ENCODE measurements at regions of chr17 and their contacts with region 1.

Region 1: GRCh38 chr17:75077496-75078283 is 10.1 kb upstream of the SLC16A5 start:
- DNase-seq: peak in 1 of 2 experiments; percentile 55
- H3K4me3 ChIP-seq: peak overlapping the region; percentile 22; the same call in 1 of the 2 replicates
- H3K27ac ChIP-seq: peak overlapping the region; percentile 93
- H3K4me1 ChIP-seq: peaks cover 35% of the 10 kb centered on the region
- H3K27me3 ChIP-seq: no peaks in the 10 kb centered on the region
- CTCF ChIP-seq: no peak

Region 2: DNA sequence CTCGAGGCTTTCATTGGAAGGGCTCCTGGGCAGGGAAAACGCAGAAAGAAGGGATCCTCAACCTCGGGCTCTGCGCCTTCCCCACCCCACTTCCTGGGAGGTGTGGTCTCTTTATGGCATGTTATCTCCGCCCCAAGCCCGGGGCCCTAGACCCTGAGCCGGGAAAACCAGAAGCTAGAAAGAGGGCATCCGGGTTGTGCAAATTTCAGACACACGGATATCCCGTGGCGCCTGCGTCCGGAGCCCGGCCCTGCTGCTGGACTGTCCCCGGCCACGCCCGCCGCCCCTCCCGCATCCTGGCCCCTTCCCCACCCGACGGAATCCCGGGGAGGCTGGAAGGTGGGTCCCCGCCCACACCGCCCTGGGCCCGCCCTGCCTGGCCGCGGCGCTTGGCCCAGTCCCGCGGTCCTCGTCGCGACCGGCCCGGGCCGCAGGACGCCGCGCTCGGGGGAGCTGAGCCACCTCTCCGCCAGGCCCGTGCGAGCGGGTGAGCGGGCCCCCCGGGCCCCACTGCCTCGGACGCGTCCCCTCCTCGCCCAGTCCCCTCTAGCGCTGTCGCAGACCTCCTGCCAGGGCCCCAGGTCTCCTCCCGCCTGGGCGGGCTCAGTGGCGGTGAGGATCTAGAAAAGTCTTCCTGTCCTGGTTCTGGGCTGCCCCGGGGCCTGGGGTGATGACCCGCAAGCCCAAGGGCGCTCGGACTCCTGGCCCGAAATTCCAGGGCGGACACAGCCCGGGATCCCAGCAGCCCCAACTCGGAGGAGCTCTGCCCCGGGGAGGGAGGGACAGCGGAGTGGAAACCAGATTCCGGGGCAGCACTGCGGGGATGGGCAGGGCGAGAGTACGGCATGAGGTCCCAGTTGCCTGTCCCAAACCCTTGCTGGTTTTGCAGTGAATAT is 10.1 kb after region 1 on chr17 and contains the start of gene SLC16A5:
- CTCF ChIA-PET with region 1: interaction called, 4 read pairs
- POLR2A ChIA-PET with region 1: interaction called, 18 read pairs
- intact Hi-C with region 1: no loop called
- DNase-seq: peak; percentile 93 to 98
- H3K4me3 ChIP-seq: peak within 1 kb of the TSS; percentile 93
- H3K27ac ChIP-seq: peak within 1 kb of the TSS; percentile 91
- H3K4me1 ChIP-seq: peaks cover 84% of the 10 kb centered on the region
- H3K27me3 ChIP-seq: no peaks in the 10 kb centered on the region
- CTCF ChIP-seq: no peak
- total RNA-seq, gene SLC16A5: 70.2 and 88.5 TPM in 2 replicates

Region 3: DNA sequence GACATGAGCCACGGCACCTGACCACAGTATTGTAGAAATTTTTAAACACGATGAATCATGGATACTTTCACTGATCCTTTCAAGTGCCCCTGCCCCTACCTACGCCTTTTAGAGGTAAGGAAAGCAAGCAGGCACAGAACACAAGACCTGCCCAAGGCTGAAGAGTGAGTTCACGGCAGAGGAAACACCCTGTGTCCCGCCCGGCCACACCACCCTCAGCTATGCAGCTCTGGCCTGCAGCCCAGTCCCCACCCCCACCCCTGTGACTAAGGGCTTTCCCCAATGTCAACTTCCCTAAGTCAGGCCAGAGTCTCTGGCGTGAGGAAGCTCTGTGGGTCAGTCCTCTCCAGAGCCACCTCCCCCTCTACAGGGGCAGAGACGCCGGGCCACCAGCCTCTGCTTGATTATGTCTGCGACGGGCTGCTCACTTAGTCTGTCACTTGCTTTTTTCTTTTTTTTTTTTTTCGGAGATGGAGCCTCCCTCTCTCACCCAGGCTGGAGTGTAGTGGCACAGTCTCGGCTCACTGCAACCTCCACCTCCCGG is 18.5 kb after region 1 on chr17:
- CTCF ChIA-PET with region 1: interaction called, 5 read pairs
- POLR2A ChIA-PET with region 1: interaction called, 18 read pairs
- intact Hi-C with region 1: loop called (anchors 1 kb)
- DNase-seq: peak; percentile 89 to 99
- H3K4me3 ChIP-seq: no peak overlapping the region; the same call in 1 of the 2 replicates
- H3K27ac ChIP-seq: peak overlapping the region; percentile 89
- H3K4me1 ChIP-seq: peaks cover 58% of the 10 kb centered on the region
- H3K27me3 ChIP-seq: no peaks in the 10 kb centered on the region
- CTCF ChIP-seq: no peak

Region 4: DNA sequence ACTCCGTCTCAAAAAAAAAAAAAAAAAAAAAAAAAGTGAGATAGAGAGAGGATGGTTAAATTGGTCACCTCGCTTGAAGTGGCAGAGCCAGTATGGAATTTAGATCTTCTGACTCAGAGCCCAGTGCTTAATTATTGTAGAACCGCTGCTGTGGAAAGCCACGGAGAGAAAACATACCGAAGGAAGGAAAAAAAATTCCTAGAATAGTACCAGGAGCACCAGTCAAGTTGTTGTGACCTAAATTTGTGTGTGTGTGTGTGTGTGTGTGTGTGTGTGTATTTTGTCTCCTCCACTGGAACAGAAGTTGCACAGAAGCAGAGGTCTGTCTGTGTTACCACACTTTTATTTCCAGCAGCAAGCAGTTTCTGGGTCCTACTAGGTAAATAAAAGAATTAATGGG is 117.2 kb after region 1 on chr17:
- CTCF ChIA-PET with region 1: no interaction called
- POLR2A ChIA-PET with region 1: no interaction called
- intact Hi-C with region 1: no loop called
- DNase-seq: peak; percentile 23 to 88
- H3K4me3 ChIP-seq: no peak overlapping the region; the same call in 1 of the 2 replicates
- H3K27ac ChIP-seq: peak overlapping the region; percentile 46
- H3K4me1 ChIP-seq: peaks cover 5% of the 10 kb centered on the region
- H3K27me3 ChIP-seq: no peaks in the 10 kb centered on the region
- CTCF ChIP-seq: no peak

Region 5: GRCh38 chr17:75205037-75205792 is 127.5 kb after region 1 on chr17 and contains the start of gene NUP85:
- CTCF ChIA-PET with region 1: interaction called, 14 read pairs
- POLR2A ChIA-PET with region 1: no interaction called
- intact Hi-C with region 1: no loop called
- DNase-seq: peak; percentile 90 to 96
- H3K4me3 ChIP-seq: peak within 1 kb of the TSS; percentile 93
- H3K27ac ChIP-seq: peak within 1 kb of the TSS; percentile 92
- H3K4me1 ChIP-seq: peaks cover 14% of the 10 kb centered on the region
- H3K27me3 ChIP-seq: no peaks in the 10 kb centered on the region
- CTCF ChIP-seq: no peak
- total RNA-seq, gene NUP85: 64.2 and 73.1 TPM in 2 replicates